Heart right ventricle (tissue), 16 donors: ENCODE measurements at regions of chr10 and their contacts with region 1.

Region 1: DNA sequence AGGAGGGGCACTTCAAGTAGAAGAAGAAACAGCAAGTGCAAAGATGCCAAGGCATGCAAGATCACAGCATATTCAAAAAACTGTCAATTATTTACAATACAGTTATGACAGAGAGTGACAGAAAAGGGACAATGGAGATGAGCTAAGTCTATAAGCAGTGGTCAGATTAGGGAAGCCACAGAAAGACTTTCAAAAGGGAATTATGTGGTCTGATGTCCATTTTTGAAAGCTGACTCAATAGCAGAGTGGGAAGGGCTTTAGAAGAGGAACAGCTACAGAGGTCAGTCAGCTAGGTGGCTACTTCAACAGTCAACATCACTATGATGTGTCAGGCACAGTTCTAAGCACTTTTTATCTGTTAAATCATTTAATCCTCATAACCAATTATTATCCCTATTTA is 45.2 kb upstream of the SPOCK2 start:
- DNase-seq: no peak
- ATAC-seq: peak in 5 of 8 donors; percentile 26 to 57 (median 51)
- H3K4me3 ChIP-seq: no peak overlapping the region
- H3K27ac ChIP-seq: no peak overlapping the region
- H3K4me1 ChIP-seq: peaks cover 0 to 24% (median 4%) of the 10 kb centered on the region in 9 donors
- H3K27me3 ChIP-seq: no peaks in the 10 kb centered on the region
- CTCF ChIP-seq: no peak

Region 2: GRCh38 chr10:72229261-72230251 is 96.0 kb after region 1 on chr10:
- intact Hi-C with region 1: loop called in 4 of 10 experiments (anchors 5 to 10 kb)
- DNase-seq: no peak
- ATAC-seq: peak in 3 of 8 donors; percentile 38 to 48 (median 45)
- H3K4me3 ChIP-seq: no peak overlapping the region
- H3K27ac ChIP-seq: peak overlapping the region in 7 of 10 donors; percentile 24 to 69 (median 36)
- H3K4me1 ChIP-seq: peaks cover 0 to 41% (median 25%) of the 10 kb centered on the region in 9 donors
- H3K27me3 ChIP-seq: no peaks in the 10 kb centered on the region
- CTCF ChIP-seq: no peak

Region 3: GRCh38 chr10:72337020-72337629 is 203.6 kb after region 1 on chr10:
- intact Hi-C with region 1: loop called in 9 of 10 experiments (anchors 2 to 10 kb)
- DNase-seq: peak; percentile 88 to 90
- ATAC-seq: peak; percentile 30 to 51 (median 43)
- H3K4me3 ChIP-seq: no peak overlapping the region
- H3K27ac ChIP-seq: peak overlapping the region; percentile 46 to 97 (median 90)
- H3K4me1 ChIP-seq: peaks cover 34 to 70% (median 57%) of the 10 kb centered on the region in 9 donors
- H3K27me3 ChIP-seq: no peaks in the 10 kb centered on the region
- CTCF ChIP-seq: peak; percentile 95 to 99 (median 96)